ENCODE measurements at regions of chr1 and their contacts with region 1.

Region 1: GRCh38 chr1:172429331-172430127 is 9.0 kb downstream of the C1orf105 start:
- DNase-seq: peak; percentile 51
- CTCF ChIP-seq: peak; percentile 37

Region 2: GRCh38 chr1:171999756-172000155 is 429.8 kb before region 1 on chr1:
- in situ Hi-C with region 1: loop called (anchors 10 kb)
- DNase-seq: no peak
- CTCF ChIP-seq: no peak

Region 3: DNA sequence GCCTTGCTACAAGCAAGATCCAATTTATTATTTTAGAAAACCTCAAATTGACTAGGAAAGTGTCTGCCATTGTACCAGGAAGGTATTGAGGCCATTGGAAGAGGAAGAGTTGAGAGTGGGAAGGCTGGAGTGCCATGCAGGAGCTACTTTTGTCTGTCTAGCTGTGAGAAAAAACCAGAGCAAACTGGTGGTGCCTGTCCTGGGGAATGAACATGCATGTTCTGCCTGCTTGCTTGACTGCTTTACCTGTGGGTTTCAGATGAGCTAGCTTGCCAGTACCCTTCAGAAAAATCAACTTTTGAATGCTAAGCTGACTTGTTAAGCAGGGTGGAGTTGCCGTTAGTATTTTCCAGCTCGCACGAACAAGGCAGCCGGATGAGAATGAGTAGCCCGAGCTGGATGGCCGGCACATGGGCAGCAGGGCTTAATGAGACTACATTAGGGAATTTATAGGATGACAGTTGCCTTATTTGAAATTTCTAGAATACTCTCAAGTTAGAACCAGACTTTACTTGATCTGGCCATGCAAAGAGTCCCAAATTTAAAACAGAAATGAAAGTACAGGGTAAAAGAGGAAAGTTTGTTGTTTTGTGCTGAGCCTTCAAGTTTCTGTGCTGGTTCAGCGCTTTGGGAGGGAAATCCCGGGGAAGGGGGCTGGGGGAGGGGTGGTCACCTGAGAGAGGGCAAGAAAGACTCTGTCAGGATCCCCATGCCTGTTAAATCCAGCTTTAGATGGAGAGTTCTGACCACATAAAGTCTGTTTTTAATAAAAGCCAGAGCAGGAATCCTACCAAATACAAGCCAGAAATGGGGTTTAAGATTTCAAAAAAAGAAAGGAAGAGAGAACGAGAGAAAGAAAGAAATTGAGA is 38.6 kb before region 1 on chr1:
- in situ Hi-C with region 1: no loop called
- DNase-seq: peak; percentile 44
- CTCF ChIP-seq: no peak

Measured in GM13976 (cell line).